SK-N-SH (cell line): ENCODE measurements at regions of chr1 and their contacts with region 1.

Region 1: DNA sequence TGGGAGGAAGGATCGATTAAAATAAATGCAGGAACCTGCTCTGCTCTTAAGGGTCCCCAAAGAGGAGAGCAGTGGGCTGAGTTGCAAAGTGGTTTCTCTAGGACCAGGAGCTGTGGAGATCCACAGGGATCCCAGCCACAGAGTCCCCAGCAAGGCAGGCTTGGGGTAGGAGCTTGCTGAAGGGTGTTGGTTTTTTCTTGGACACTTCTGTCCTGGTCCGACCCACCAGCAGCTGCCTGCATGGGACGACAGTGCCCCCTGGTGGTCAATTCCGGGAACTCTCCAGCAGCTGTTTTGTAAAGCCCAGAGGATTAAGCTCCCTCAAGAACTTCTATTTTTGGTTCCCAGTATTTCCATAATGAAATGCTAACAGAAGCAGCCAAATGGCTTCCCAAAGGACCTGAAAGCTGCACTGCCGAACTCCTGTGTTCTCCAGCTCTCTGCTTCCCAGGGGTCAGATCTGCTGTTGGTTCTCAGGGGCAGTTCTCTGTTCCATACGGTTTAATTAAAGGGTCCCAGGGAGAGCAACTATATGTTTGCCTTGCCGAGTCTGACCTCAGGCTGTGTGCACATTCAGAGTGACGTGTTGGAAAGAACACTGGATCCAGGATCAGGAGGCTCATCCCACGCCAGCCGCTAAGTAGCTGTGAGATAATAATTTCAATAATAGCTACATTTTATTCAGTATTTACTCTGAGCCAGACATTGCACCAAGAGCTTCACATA is 23.2 kb downstream of the NENF start:
- DNase-seq: peak; percentile 83
- H3K4me3 ChIP-seq: no peak overlapping the region; a peak in 1 of 4 replicates
- H3K27ac ChIP-seq: no peak overlapping the region
- H3K4me1 ChIP-seq: peaks cover 0 to 14% of the 10 kb centered on the region in 2 experiments; a peak in 1 of 4 replicates
- H3K27me3 ChIP-seq: no peaks in the 10 kb centered on the region
- CTCF ChIP-seq: peak; percentile 97
- EP300 ChIP-seq: no peak
- RAD21 ChIP-seq: peak; percentile 98

Region 2: GRCh38 chr1:212062832-212063438 is 393.0 kb before region 1 on chr1:
- CTCF ChIA-PET with region 1: interaction called, 117 read pairs
- POLR2A ChIA-PET with region 1: no interaction called
- DNase-seq: peak; percentile 46
- H3K4me3 ChIP-seq: no peak overlapping the region
- H3K27ac ChIP-seq: no peak overlapping the region
- H3K4me1 ChIP-seq: no peaks in the 10 kb centered on the region
- H3K27me3 ChIP-seq: no peaks in the 10 kb centered on the region
- CTCF ChIP-seq: peak; percentile 79
- EP300 ChIP-seq: no peak
- RAD21 ChIP-seq: peak; percentile 67

Region 3: GRCh38 chr1:212082765-212083406 is 373.1 kb before region 1 on chr1:
- CTCF ChIA-PET with region 1: interaction called, 14 read pairs
- POLR2A ChIA-PET with region 1: no interaction called
- DNase-seq: no peak
- H3K4me3 ChIP-seq: no peak overlapping the region
- H3K27ac ChIP-seq: no peak overlapping the region
- H3K4me1 ChIP-seq: peaks cover under 1 to 4% of the 10 kb centered on the region in 2 experiments; a peak in 2 of 4 replicates
- H3K27me3 ChIP-seq: no peaks in the 10 kb centered on the region
- CTCF ChIP-seq: no peak
- EP300 ChIP-seq: no peak
- RAD21 ChIP-seq: no peak

Region 4: GRCh38 chr1:212353181-212353580 is 102.8 kb before region 1 on chr1:
- CTCF ChIA-PET with region 1: interaction called, 11 read pairs
- POLR2A ChIA-PET with region 1: no interaction called
- DNase-seq: no peak
- H3K4me3 ChIP-seq: no peak overlapping the region
- H3K27ac ChIP-seq: no peak overlapping the region
- H3K4me1 ChIP-seq: no peaks in the 10 kb centered on the region; a peak in 1 of 4 replicates
- H3K27me3 ChIP-seq: no peaks in the 10 kb centered on the region
- CTCF ChIP-seq: no peak
- EP300 ChIP-seq: no peak
- RAD21 ChIP-seq: no peak

Region 5: DNA sequence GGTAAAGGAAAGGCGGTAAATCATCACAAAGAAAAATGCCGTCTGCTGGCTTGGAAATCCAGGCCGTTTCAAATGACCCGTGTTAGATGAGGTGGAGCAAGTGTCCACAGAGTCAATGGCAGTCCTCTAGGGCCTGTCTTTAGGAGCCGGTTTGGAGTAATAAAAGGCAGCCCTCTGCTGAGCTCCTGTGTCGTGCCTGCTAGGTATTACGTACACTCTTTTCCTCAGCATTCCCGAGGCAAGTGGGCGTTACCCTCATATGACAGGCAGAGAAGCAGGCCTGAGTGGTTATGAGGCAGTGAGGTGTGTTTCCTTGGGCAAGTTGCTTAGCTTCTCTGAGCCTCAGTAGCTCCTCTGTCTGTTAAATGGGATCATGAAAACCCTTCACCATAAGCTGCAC is 15.5 kb before region 1 on chr1:
- CTCF ChIA-PET with region 1: interaction called, 22 read pairs
- POLR2A ChIA-PET with region 1: no interaction called
- DNase-seq: no peak
- H3K4me3 ChIP-seq: no peak overlapping the region
- H3K27ac ChIP-seq: no peak overlapping the region
- H3K4me1 ChIP-seq: no peaks in the 10 kb centered on the region
- H3K27me3 ChIP-seq: no peaks in the 10 kb centered on the region
- CTCF ChIP-seq: no peak
- EP300 ChIP-seq: no peak
- RAD21 ChIP-seq: no peak

Region 6: DNA sequence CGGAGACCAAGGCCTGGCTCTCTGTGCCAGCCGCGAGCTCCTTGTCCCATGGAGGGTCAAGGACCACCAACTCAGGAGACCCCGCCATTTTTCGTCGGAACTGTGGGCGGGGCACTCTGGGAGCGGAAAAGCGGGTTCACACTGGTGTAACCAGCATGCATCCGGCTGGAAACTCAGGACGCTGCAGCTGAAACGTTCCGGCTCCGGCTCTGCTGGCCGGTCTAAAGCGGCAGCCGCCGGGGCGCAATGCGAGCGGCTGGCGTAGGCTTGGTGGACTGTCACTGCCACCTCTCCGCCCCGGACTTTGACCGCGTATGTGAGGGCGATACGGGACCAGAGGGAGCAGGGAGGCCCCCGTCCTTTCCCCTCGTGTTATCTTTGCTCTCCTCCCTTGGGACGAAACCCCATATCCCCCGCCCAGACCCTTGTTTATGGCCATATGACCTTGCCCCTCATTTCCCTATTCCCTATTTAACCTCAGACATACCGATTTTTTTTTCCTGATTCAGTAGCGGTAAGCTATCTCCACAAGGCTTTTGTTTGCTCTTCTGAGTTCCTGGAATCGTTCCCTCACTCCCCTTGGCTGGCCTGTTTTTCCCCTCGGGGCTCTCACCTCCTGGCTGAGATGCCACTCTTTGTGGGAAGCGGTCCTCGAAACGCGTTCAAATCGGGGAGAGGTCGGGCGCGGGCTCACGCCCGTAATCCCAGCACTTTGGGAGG is 335.9 kb after region 1 on chr1 and contains the starts of genes NSL1 and TATDN3:
- CTCF ChIA-PET with region 1: interaction called, 13 read pairs
- POLR2A ChIA-PET with region 1: no interaction called
- DNase-seq: peak; percentile 85
- H3K4me3 ChIP-seq: peak within 1 kb of the TSS; percentile 77 to 98
- H3K27ac ChIP-seq: peak within 1 kb of the TSS; percentile 86 to 88
- H3K4me1 ChIP-seq: peaks cover 2 to 3% of the 10 kb centered on the region in 2 experiments; a peak in 2 of 4 replicates
- H3K27me3 ChIP-seq: no peaks in the 10 kb centered on the region
- CTCF ChIP-seq: no peak
- EP300 ChIP-seq: peak in 1 of 2 experiments; percentile 46; a peak in 1 of 4 replicates
- RAD21 ChIP-seq: 0 out of 2 replicates have a peak, but pooled peaks have one; percentile 7
- polyA plus RNA-seq, gene NSL1: 17.8 and 22.5 TPM in 2 replicates
- polyA plus RNA-seq, gene TATDN3: 5.2 and 6.6 TPM in 2 replicates